HepG2 (cell line): ENCODE measurements at regions of chr5 and their contacts with region 1.

Region 1: DNA sequence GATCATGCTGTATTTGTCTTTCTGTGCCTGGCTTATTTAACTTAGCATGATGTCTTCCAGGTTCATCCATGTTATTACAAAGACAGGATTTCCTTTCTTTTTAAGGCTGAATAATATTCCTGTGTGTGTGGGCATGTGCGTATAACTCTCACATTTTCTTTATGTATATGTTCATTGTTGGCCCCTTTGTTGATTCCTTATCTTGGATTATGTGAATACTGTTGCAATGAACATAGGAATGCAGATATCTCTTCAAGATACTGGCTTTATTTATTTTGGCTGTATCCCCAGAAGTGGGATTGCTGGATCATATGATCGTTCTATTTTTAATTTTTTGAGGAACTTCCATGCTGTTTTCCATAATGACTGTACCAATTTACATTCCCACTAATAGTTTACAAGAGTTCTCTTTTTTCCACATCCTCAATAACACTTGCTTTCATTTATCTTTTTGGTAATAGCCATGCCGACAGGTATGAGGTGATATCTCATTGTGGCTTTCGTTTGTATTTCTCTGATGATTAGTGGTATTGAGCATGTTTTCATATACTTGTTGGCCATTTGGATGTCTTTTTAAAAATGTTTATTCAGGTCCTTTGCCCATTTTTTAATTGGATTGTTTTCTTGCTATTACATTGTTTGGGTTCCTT is 38.0 kb downstream of the CREBRF start:
- DNase-seq: peak; percentile 73
- ATAC-seq: no peak
- H3K4me3 ChIP-seq: no peak overlapping the region
- H3K27ac ChIP-seq: no peak overlapping the region
- H3K4me1 ChIP-seq: peaks cover 14% of the 10 kb centered on the region
- H3K27me3 ChIP-seq: no peaks in the 10 kb centered on the region
- CTCF ChIP-seq: no peak
- EP300 ChIP-seq: 0 out of 4 replicates have a peak, but pooled peaks of 1 of the 2 experiments have one; percentile 6
- POLR2A ChIP-seq: no peak
- RAD21 ChIP-seq: no peak

Region 2: GRCh38 chr5:172800088-172800551 is 294.0 kb before region 1 on chr5:
- CTCF ChIA-PET with region 1: no interaction called
- POLR2A ChIA-PET with region 1: no interaction called
- in situ Hi-C with region 1: no loop called
- intact Hi-C with region 1: no loop called
- DNase-seq: no peak
- ATAC-seq: peak; percentile 45
- H3K4me3 ChIP-seq: no peak overlapping the region
- H3K27ac ChIP-seq: no peak overlapping the region
- H3K4me1 ChIP-seq: peaks cover 78% of the 10 kb centered on the region
- H3K27me3 ChIP-seq: no peaks in the 10 kb centered on the region
- CTCF ChIP-seq: no peak
- EP300 ChIP-seq: no peak
- POLR2A ChIP-seq: no peak
- RAD21 ChIP-seq: no peak

Region 3: GRCh38 chr5:173069671-173070070 is 24.5 kb before region 1 on chr5:
- CTCF ChIA-PET with region 1: no interaction called
- POLR2A ChIA-PET with region 1: no interaction called
- in situ Hi-C with region 1: no loop called
- intact Hi-C with region 1: loop called (anchors 1 kb)
- DNase-seq: no peak
- ATAC-seq: no peak
- H3K4me3 ChIP-seq: no peak overlapping the region
- H3K27ac ChIP-seq: no peak overlapping the region
- H3K4me1 ChIP-seq: peaks cover 17% of the 10 kb centered on the region
- H3K27me3 ChIP-seq: no peaks in the 10 kb centered on the region
- CTCF ChIP-seq: no peak
- EP300 ChIP-seq: no peak
- POLR2A ChIP-seq: no peak
- RAD21 ChIP-seq: no peak

Region 4: GRCh38 chr5:173498286-173498685 is 404.1 kb after region 1 on chr5:
- CTCF ChIA-PET with region 1: no interaction called
- POLR2A ChIA-PET with region 1: no interaction called
- in situ Hi-C with region 1: no loop called
- intact Hi-C with region 1: no loop called
- DNase-seq: no peak
- ATAC-seq: no peak
- H3K4me3 ChIP-seq: no peak overlapping the region
- H3K27ac ChIP-seq: no peak overlapping the region
- H3K4me1 ChIP-seq: peaks cover 51% of the 10 kb centered on the region
- H3K27me3 ChIP-seq: peaks cover 0 to 34% of the 10 kb centered on the region in 2 experiments; a peak in 2 of 5 replicates
- CTCF ChIP-seq: no peak
- EP300 ChIP-seq: no peak
- POLR2A ChIP-seq: no peak
- RAD21 ChIP-seq: no peak